Activated naive CD8-positive, alpha-beta T cell treated with anti-CD3 and anti-CD28 coated beads, Interleukin-2, amount 10 ng/mL, durations not matched to agents 7 days and 5 days (primary cell): ENCODE measurements at regions of chr19 and their contacts with region 1.

Region 1: GRCh38 chr19:40425450-40426287 is at the start of gene SERTAD1:
- DNase-seq: peak; percentile 100
- ATAC-seq: peak; percentile 91
- H3K4me3 Mint-ChIP-seq: peak within 1 kb of the TSS; percentile 88
- H3K27ac Mint-ChIP-seq: peak within 1 kb of the TSS; percentile 92
- H3K4me1 Mint-ChIP-seq: peaks cover 20% of the 10 kb centered on the region
- H3K27me3 Mint-ChIP-seq: no peaks in the 10 kb centered on the region
- total RNA-seq, gene SERTAD1: 7.3 to 7.9 TPM

Region 2: DNA sequence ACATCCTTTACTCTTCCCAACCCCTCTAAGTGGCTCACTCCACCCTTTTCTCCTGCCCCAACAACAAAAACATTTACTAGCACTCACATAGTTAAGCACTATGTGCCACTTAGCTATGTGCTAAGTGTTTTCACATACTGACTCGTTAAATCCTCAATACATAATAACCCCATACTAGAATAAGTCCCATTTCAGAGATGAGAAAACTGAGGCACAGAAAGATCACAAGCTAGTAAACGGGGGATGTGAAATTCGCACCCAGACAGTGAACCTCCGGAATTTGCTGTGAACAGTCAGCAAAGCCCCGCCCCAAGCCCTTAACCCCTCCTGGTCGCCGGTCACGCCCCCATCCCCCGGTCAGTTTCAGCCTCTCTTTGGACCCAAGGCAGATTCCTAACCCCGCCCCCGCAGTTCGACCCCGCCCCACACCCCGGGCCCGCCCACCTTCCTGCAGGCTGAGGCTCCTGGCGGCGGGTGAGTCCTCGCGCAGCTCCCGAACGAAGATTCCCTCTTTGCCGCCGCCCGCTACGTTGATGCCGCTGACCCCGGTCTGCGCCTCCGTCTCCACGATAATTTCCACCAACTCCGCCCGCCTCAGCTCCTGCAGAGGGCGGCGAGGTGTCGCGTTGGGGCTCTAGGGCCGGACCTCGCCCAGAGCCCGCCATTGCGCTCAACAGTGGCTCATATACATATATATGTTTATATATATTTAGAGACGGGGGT is 22.2 kb before region 1 on chr19:
- POLR2A ChIA-PET with region 1: interaction called, 21 read pairs
- DNase-seq: peak; percentile 89
- ATAC-seq: peak; percentile 63
- H3K4me3 Mint-ChIP-seq: peak overlapping the region; percentile 94
- H3K27ac Mint-ChIP-seq: peak overlapping the region; percentile 76
- H3K4me1 Mint-ChIP-seq: peaks cover 21% of the 10 kb centered on the region
- H3K27me3 Mint-ChIP-seq: peaks cover 16% of the 10 kb centered on the region

Region 3: GRCh38 chr19:40444192-40445028 is 18.7 kb after region 1 on chr19 and contains the start of gene SERTAD3:
- POLR2A ChIA-PET with region 1: interaction called, 35 read pairs
- DNase-seq: peak; percentile 99
- ATAC-seq: peak; percentile 64
- H3K4me3 Mint-ChIP-seq: peak within 1 kb of the TSS; percentile 96
- H3K27ac Mint-ChIP-seq: peak within 1 kb of the TSS; percentile 96
- H3K4me1 Mint-ChIP-seq: peaks cover 14% of the 10 kb centered on the region
- H3K27me3 Mint-ChIP-seq: no peaks in the 10 kb centered on the region
- total RNA-seq, gene SERTAD3: 12.9 to 13.5 TPM

Region 4: GRCh38 chr19:40465557-40466150 is 40.0 kb after region 1 on chr19 and contains the start of gene BLVRB:
- POLR2A ChIA-PET with region 1: interaction called, 12 read pairs
- DNase-seq: peak; percentile 100
- ATAC-seq: peak; percentile 85
- H3K4me3 Mint-ChIP-seq: peak within 1 kb of the TSS; percentile 73
- H3K27ac Mint-ChIP-seq: peak within 1 kb of the TSS; percentile 79
- H3K4me1 Mint-ChIP-seq: peaks cover 24% of the 10 kb centered on the region
- H3K27me3 Mint-ChIP-seq: peaks cover 21% of the 10 kb centered on the region
- total RNA-seq, gene BLVRB: 20.4 to 21.5 TPM